CD14-positive monocyte (primary cell): ENCODE measurements at regions of chr11 and their contacts with region 1.

Region 1: DNA sequence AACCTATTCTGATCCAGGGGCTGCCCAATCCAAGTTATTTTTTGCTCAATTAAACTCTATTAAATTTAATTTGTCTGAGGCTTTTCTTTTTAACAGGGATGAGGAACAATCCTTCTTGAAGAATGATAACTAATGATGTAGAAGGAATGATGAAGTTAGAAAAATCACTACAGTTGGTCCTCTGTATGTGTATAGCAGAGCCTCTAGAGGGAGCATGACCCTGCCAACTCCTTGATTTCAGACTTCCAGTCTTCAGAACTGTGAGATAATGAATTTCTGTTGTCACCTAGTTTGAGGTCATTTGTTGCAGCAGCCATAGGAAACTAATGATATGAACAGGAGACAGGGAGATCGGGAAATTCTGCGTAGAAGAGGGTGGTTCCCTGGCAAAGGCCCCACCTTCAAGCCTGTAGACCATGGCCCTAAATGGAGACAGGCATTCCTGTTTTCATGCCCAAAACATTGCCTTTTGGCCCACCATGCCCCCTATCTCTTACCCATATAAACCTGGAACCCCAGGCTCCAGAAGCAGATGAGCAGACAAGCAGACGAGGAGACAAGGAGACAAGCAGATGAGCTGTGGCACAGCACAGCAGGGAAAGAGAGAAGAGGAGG is 7.7 kb upstream of the QSER1 start:
- DNase-seq: no peak
- H3K4me3 ChIP-seq: no peak overlapping the region
- H3K4me3 Mint-ChIP-seq: no peak overlapping the region
- H3K27ac ChIP-seq: no peak overlapping the region
- H3K27ac Mint-ChIP-seq: no peak overlapping the region
- H3K4me1 ChIP-seq: no peaks in the 10 kb centered on the region
- H3K4me1 Mint-ChIP-seq: no peaks in the 10 kb centered on the region
- H3K27me3 ChIP-seq: no peaks in the 10 kb centered on the region
- H3K27me3 Mint-ChIP-seq: peaks cover 2 to 9% (median 3%) of the 10 kb centered on the region in 3 donors
- CTCF ChIP-seq: peak; percentile 54

Region 2: GRCh38 chr11:32817181-32817851 is 67.6 kb before region 1 on chr11:
- intact Hi-C with region 1: loop called in 1 of 2 experiments (anchors 10 kb)
- DNase-seq: no peak
- H3K4me3 ChIP-seq: no peak overlapping the region
- H3K4me3 Mint-ChIP-seq: no peak overlapping the region
- H3K27ac ChIP-seq: no peak overlapping the region
- H3K27ac Mint-ChIP-seq: no peak overlapping the region
- H3K4me1 ChIP-seq: peaks cover 10 to 30% of the 10 kb centered on the region in 2 donors
- H3K4me1 Mint-ChIP-seq: peaks cover 23% of the 10 kb centered on the region
- H3K27me3 ChIP-seq: no peaks in the 10 kb centered on the region
- H3K27me3 Mint-ChIP-seq: peaks cover 0 to 5% (median 1%) of the 10 kb centered on the region in 3 donors
- CTCF ChIP-seq: no peak

Region 3: DNA sequence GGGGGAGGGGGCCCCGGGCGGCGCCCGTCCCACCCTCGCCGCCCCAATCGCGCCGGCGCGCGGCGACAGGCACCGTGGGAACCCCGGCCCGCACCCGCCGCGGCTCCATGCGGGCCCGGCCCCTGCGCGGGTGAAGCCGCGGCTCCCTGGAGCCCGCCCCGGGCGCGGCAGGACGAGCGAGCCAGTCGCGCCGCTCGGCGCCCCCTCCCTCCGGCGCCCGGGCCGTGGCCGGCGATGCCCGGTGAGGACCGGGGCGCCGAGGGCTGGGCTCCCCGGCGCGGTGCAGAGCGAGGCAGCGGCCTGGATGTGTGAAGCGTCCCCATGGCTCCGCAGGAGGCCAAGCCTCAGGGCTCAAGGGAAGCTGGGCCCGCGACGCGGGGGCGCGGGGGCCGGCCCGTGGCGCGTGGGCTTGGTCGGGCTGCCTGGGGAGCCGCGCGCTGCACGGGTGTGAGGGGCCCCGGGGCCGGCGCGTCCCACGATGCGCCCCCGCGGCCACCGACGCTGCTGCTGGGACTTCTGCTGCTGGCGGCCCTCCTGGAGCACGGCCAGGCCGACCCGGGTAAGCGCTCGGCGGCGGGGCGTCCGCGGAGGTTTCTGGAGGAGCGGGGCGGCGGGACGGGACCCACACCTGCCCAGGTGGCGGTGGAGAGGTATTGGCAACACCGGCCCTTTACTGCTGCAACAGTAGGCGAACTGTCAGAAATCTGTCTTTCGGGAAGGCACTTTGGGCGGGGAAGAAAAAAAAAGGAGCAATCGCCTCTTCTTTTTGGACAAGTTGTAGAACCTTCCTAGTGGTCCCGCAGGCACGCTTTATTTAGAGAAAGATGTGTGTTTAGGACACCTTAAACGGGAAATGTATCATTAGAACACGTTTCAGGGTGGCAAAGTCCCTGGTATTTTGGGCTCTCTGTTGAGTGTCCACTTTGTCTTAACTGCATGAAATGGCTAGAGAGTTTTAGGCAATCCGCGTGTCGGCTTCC is 491.7 kb after region 1 on chr11:
- intact Hi-C with region 1: no loop called
- DNase-seq: no peak
- H3K4me3 ChIP-seq: no peak overlapping the region
- H3K4me3 Mint-ChIP-seq: peak overlapping the region in 1 of 2 donors; percentile 62
- H3K27ac ChIP-seq: no peak overlapping the region
- H3K27ac Mint-ChIP-seq: no peak overlapping the region
- H3K4me1 ChIP-seq: peaks cover 3 to 7% of the 10 kb centered on the region in 2 donors
- H3K4me1 Mint-ChIP-seq: peaks cover 3% of the 10 kb centered on the region
- H3K27me3 ChIP-seq: peaks cover 37 to 57% of the 10 kb centered on the region in 2 donors
- H3K27me3 Mint-ChIP-seq: peaks cover 38 to 59% (median 55%) of the 10 kb centered on the region in 3 donors
- CTCF ChIP-seq: no peak